ENCODE measurements at regions of chr5 and their contacts with region 1.

Region 1: DNA sequence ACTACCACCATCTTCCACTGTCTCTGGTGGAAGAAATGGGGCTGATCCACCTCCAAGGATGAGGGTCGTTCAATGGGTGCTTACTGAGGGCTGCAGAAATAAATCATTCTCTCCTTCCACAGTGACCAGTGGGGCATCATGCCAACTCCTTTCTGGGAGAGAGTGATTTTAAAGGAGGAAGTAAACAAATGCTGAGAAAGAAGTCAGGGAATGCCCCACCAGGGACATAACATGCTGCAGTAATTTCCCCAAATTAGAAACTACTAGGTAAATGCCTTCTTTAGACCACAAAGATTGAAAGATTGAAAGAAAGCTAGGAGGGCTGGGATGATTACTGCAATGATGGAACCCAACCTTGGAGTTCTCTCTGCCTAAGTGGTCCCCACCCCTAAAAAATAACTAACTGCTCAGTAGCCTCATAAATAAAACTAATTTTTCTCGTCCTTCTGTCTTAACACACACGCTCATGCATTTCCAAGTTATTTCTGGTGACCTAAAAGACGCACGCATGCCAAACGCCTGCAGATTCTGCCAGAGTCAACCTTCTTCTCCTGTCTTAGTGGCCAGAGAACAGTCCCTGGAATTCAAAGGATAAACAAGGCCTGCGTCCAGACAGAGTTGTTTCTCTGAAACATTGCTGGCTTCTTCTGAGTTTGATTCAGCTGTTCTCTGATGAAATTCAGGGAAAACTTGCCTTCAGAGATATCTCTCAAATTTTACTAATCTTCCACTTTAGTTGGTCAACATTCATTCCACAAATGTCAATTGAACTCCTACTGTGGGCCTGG is 250.0 kb downstream of the NR3C1 start:
- DNase-seq: peak; percentile 24 to 91
- H3K4me3 ChIP-seq: peak overlapping the region in 1 of 2 donors; percentile 16
- H3K27ac ChIP-seq: peak overlapping the region; percentile 75 to 84
- H3K4me1 ChIP-seq: peaks cover 16 to 40% of the 10 kb centered on the region in 2 donors
- H3K27me3 ChIP-seq: no peaks in the 10 kb centered on the region
- CTCF ChIP-seq: no peak

Region 2: DNA sequence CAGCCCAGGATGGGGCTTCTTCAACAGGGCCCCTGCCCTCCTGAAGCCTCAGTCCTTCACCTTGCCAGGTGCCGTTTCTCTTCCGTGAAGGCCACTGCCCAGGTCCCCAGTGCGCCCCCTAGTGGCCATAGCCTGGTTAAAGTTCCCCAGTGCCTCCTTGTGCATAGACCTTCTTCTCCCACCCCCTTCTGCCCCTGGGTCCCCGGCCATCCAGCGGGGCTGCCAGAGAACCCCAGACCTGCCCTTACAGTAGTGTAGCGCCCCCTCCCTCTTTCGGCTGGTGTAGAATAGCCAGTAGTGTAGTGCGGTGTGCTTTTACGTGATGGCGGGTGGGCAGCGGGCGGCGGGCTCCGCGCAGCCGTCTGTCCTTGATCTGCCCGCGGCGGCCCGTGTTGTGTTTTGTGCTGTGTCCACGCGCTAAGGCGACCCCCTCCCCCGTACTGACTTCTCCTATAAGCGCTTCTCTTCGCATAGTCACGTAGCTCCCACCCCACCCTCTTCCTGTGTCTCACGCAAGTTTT is 1641.1 kb before region 1 on chr5:
- intact Hi-C with region 1: loop called (anchors 5 kb)
- DNase-seq: peak in 1 of 2 donors; percentile 93
- H3K4me3 ChIP-seq: peak overlapping the region; percentile 52 to 78
- H3K27ac ChIP-seq: peak overlapping the region; percentile 98 to 99
- H3K4me1 ChIP-seq: peaks cover 36 to 51% of the 10 kb centered on the region in 2 donors
- H3K27me3 ChIP-seq: no peaks in the 10 kb centered on the region
- CTCF ChIP-seq: peak; percentile 83 to 87 (median 86)

Region 3: DNA sequence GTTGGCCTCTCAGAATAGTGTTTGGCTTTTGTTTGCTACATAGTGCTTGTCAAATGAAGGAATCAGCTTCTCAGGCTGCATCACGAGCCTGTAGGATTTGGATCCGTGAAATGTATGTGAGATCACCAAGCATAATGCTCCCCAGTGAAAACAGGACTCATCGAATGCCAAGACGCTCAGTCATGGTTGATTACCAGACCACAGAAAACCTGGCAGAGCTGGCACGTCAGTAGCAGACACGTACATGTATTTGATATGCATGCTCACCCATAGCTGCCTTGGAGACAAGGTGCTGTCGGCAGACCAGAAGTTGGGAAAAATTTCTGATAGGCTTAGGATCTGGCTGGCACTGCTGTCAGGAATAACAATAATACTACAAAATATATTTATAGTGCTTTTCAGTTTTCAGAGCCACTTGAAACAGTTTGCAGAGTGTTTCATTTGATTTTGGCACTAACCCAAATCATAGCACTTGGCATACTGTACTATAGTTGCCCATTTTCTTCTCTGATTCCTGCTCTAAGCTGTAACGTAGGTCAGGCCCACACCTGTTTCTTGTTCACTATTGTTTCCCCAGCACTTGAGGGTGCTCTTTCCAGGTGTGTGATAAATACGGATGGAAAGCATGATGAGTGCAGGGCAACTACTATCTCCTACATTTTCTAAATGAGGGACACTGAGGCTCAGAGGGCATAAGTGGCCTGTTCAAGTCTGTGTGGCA is 23.9 kb after region 1 on chr5:
- intact Hi-C with region 1: loop called (anchors 2 kb)
- DNase-seq: peak; percentile 20 to 87
- H3K4me3 ChIP-seq: no peak overlapping the region
- H3K27ac ChIP-seq: peak overlapping the region in 1 of 2 donors; percentile 34
- H3K4me1 ChIP-seq: peaks cover 0 to 7% of the 10 kb centered on the region in 2 donors
- H3K27me3 ChIP-seq: no peaks in the 10 kb centered on the region
- CTCF ChIP-seq: no peak

Region 4: DNA sequence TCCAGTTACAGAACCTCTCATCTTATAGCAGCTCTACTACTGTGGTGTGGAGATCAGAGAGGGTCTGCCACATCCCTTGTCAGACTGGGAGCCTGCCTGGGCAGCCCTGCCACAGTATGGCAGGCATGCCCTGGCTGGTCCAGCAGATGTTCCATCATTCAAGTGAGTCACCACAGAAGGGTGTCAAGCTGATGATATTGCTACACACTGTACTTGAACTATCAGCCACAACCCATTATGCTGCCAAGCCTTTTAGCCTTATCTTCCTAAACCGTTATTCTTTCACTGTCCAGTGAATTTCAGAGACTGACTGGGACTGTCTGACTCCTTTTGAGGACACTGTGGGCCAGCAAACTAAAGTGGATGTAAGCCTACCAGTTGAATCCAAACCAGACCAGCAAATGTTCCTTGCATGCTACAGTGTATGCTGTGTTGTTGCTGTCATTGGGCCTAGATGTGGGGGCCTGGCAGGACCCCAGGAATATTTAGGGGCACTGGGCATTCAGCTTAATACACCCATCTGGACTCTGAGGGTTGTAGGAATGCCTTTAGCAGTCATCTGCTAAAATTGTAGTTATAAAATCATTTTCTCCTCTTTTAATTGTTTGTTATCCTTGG is 47.4 kb after region 1 on chr5:
- intact Hi-C with region 1: no loop called
- DNase-seq: no peak
- H3K4me3 ChIP-seq: no peak overlapping the region
- H3K27ac ChIP-seq: no peak overlapping the region
- H3K4me1 ChIP-seq: peaks cover 3 to 4% of the 10 kb centered on the region in 2 donors
- H3K27me3 ChIP-seq: no peaks in the 10 kb centered on the region
- CTCF ChIP-seq: no peak

Region 5: DNA sequence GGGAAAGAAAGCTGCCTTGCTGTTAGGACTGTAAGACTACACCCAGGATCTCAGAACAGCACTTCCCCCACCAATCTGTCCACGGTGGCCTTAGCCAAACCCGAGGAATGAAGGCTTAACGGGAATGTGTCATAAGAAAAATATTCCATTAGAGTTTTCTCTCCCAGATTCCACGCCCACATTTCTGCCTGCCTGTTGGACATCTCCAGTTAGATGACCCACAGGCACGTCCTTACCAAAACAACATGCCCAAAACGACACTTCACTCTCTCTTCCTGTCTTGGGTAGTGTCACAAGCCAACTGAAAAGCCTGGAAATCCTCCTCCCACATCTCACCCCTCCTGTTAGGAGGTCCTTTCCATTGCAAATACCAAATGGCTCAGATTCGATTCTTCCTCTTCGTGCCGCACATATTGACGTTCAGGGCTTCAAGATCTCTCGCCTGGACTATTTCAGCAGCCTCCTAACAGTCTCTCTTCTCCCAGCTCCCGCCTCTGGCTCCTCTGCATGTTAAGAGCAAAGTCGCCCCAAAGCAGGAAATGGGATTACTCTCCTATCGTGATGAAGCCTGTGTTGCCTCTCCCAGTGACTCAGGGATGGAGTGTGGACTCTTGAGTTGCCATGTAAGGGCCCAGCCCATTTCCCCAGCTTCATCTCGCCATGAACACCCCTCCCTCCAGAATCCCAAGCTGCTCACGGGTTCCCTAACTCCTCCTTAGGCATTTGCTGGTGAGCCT is 90.6 kb after region 1 on chr5:
- intact Hi-C with region 1: loop called (anchors 5 kb)
- DNase-seq: peak in 1 of 2 donors; percentile 86
- H3K4me3 ChIP-seq: peak overlapping the region; percentile 19 to 44
- H3K27ac ChIP-seq: peak overlapping the region; percentile 63 to 70
- H3K4me1 ChIP-seq: peaks cover 3 to 13% of the 10 kb centered on the region in 2 donors
- H3K27me3 ChIP-seq: no peaks in the 10 kb centered on the region
- CTCF ChIP-seq: no peak

Region 6: DNA sequence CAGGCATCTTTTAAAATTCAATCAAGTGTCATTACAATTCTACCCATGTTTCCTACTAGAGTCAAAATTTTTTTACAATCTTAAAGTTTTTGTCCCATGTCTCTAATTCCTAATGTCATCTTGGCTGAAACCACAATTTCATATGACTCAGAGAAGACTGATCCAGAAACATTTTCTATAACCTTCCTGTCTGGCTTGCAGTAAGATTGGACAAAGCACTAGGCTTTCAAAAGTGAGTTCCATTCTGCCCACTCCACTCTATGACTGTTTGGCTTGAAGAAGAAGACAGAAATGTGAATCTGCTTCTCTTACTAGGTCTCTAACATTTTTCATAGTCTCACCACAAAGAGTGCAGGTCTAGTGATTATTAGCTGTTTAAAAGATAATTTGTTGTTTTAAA is 161.1 kb after region 1 on chr5:
- intact Hi-C with region 1: loop called (anchors 10 kb)
- DNase-seq: no peak
- H3K4me3 ChIP-seq: no peak overlapping the region
- H3K27ac ChIP-seq: peak overlapping the region in 1 of 2 donors; percentile 6
- H3K4me1 ChIP-seq: peaks cover 0 to 34% of the 10 kb centered on the region in 2 donors
- H3K27me3 ChIP-seq: no peaks in the 10 kb centered on the region
- CTCF ChIP-seq: no peak